ENCODE measurements at regions of chr11 and their contacts with region 1.

Region 1: DNA sequence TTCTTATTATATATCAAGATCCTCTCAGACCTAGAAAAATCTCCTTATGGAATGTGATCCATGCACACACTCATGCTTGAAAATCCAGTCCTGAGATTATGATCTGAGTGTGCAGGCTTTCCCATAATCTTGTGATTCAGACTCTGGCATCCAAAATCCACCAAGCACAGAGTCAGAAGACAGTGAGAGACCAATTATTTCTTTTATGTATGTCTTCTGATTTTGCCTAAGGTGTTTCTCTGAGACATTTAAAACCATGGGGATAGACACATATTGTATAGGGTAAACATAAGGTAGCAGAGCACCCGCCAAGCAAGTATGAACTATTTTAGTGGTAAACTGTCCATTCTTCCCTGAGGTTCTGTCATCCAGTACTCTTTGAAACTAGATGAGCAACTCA is 52.0 kb upstream of the MMP13 start:
- DNase-seq: no peak
- ATAC-seq: no peak
- H3K4me3 ChIP-seq: no peak overlapping the region
- H3K4me3 Mint-ChIP-seq: no peak overlapping the region
- H3K27ac ChIP-seq: no peak overlapping the region
- H3K27ac Mint-ChIP-seq: no peak overlapping the region
- H3K4me1 ChIP-seq: no peaks in the 10 kb centered on the region
- H3K4me1 Mint-ChIP-seq: no peaks in the 10 kb centered on the region
- H3K27me3 ChIP-seq: peaks cover 0 to 2% of the 10 kb centered on the region in 2 experiments
- H3K27me3 Mint-ChIP-seq: peaks cover 5% of the 10 kb centered on the region
- CTCF ChIP-seq: no peak

Region 2: DNA sequence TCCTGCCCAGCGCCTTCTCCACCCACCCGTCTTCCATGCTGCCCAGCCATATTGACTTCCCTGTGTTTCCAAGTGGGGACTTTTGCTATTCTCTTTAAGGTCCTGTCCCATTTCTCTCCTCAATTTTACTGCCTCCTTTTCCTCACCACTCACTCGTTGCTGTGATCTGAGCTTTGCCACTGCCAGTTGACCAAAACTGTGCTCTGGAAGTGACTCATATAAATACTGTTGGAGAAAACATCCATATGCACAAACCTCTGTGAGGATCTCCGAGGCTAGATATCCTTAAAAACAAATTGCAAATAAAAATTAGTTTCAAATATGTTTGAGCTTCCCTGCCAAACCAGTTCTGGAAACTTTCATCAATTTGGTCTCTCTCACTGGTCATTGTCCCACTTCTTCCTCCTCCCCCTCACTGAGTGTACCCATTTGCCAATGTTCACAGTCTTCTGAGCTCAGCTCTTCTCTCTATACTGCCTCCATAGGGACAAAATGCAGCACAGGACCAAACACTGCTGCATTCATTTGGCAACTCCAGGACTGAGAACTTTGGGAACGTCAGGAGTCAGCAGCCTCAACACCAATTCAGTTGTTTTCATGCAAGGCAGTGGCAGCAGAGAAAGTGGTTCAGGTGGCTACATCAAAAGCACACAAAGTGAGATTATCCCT is 18.0 kb before region 1 on chr11:
- CTCF ChIA-PET with region 1: no interaction called
- POLR2A ChIA-PET with region 1: no interaction called
- intact Hi-C with region 1: loop called in 1 of 2 experiments (anchors 1 kb)
- DNase-seq: no peak
- ATAC-seq: no peak
- H3K4me3 ChIP-seq: no peak overlapping the region
- H3K4me3 Mint-ChIP-seq: no peak overlapping the region
- H3K27ac ChIP-seq: no peak overlapping the region
- H3K27ac Mint-ChIP-seq: no peak overlapping the region
- H3K4me1 ChIP-seq: no peaks in the 10 kb centered on the region
- H3K4me1 Mint-ChIP-seq: no peaks in the 10 kb centered on the region
- H3K27me3 ChIP-seq: no peaks in the 10 kb centered on the region
- H3K27me3 Mint-ChIP-seq: peaks cover 14% of the 10 kb centered on the region
- CTCF ChIP-seq: no peak